Caco-2 (cell line): ENCODE measurements at regions of chr19 and their contacts with region 1.

Region 1: GRCh38 chr19:10424011-10424637 is 3.8 kb downstream of the PDE4A start:
- DNase-seq: peak; percentile 78 to 88
- H3K4me3 ChIP-seq: peak overlapping the region; percentile 34
- H3K4me3 Mint-ChIP-seq: peak overlapping the region; percentile 62
- H3K27ac Mint-ChIP-seq: no peak overlapping the region
- H3K4me1 ChIP-seq: peaks cover 15% of the 10 kb centered on the region
- H3K4me1 Mint-ChIP-seq: peaks cover 9% of the 10 kb centered on the region
- H3K27me3 ChIP-seq: peaks cover 7% of the 10 kb centered on the region
- H3K27me3 Mint-ChIP-seq: peaks cover 28% of the 10 kb centered on the region
- CTCF ChIP-seq: peak; percentile 86 to 87

Region 2: GRCh38 chr19:10461047-10461790 is 37.1 kb after region 1 on chr19:
- CTCF ChIA-PET with region 1: no interaction called
- POLR2A ChIA-PET with region 1: interaction called, 10 read pairs
- intact Hi-C with region 1: no loop called
- DNase-seq: peak; percentile 88 to 94
- H3K4me3 ChIP-seq: peak overlapping the region; percentile 28
- H3K4me3 Mint-ChIP-seq: peak overlapping the region; percentile 56
- H3K27ac Mint-ChIP-seq: no peak overlapping the region
- H3K4me1 ChIP-seq: no peaks in the 10 kb centered on the region
- H3K4me1 Mint-ChIP-seq: no peaks in the 10 kb centered on the region
- H3K27me3 ChIP-seq: no peaks in the 10 kb centered on the region
- H3K27me3 Mint-ChIP-seq: no peaks in the 10 kb centered on the region
- CTCF ChIP-seq: no peak